Tibial artery (tissue), 4 donors: ENCODE measurements at regions of chr6 and their contacts with region 1.

Region 1: GRCh38 chr6:116726947-116727346 is 38.6 kb downstream of the FAM162B start:
- DNase-seq: no peak
- H3K4me3 ChIP-seq: no peak overlapping the region
- H3K27ac ChIP-seq: no peak overlapping the region
- H3K4me1 ChIP-seq: no peaks in the 10 kb centered on the region
- H3K27me3 ChIP-seq: no peaks in the 10 kb centered on the region
- CTCF ChIP-seq: no peak

Region 2: GRCh38 chr6:115524821-115525220 is 1202.1 kb before region 1 on chr6:
- intact Hi-C with region 1: loop called (anchors 5 kb)
- DNase-seq: no peak
- H3K4me3 ChIP-seq: no peak overlapping the region
- H3K27ac ChIP-seq: no peak overlapping the region
- H3K4me1 ChIP-seq: peaks cover 0 to 6% (median 0%) of the 10 kb centered on the region in 4 donors
- H3K27me3 ChIP-seq: no peaks in the 10 kb centered on the region
- CTCF ChIP-seq: no peak

Region 3: DNA sequence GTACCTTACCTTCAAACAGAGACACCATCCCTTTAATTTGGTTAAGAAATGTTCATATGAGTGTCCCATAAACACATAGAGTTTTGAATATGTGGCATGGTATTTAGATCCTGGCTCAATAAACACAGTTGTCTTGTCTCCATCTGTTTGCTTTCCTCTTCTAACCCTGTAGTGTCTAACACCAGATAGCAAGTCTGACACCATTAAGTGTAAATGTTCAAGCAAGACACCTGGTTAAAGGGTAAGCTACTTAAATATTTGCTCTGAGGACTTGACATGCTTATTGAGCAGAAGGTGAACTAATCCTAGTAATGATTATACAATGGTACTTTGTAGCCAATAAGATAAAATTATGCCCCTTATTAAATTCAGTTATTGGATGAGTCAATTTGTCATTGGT is 902.2 kb after region 1 on chr6:
- intact Hi-C with region 1: no loop called
- DNase-seq: no peak
- H3K4me3 ChIP-seq: no peak overlapping the region
- H3K27ac ChIP-seq: no peak overlapping the region
- H3K4me1 ChIP-seq: no peaks in the 10 kb centered on the region
- H3K27me3 ChIP-seq: no peaks in the 10 kb centered on the region
- CTCF ChIP-seq: no peak